ENCODE measurements at regions of chr20 and their contacts with region 1.

Region 1: GRCh38 chr20:48897246-48897994 is 24.1 kb upstream of the ARFGEF2 start:
- DNase-seq: peak in 1 of 2 donors; percentile 25
- H3K4me3 ChIP-seq: no peak overlapping the region
- H3K27ac ChIP-seq: no peak overlapping the region
- H3K4me1 ChIP-seq: peaks cover 0 to 6% (median 0%) of the 10 kb centered on the region in 4 donors
- H3K27me3 ChIP-seq: no peaks in the 10 kb centered on the region
- CTCF ChIP-seq: no peak

Region 2: GRCh38 chr20:48411141-48411618 is 486.2 kb before region 1 on chr20:
- intact Hi-C with region 1: no loop called
- DNase-seq: no peak
- H3K4me3 ChIP-seq: no peak overlapping the region
- H3K27ac ChIP-seq: no peak overlapping the region
- H3K4me1 ChIP-seq: no peaks in the 10 kb centered on the region
- H3K27me3 ChIP-seq: peaks cover 0 to 23% of the 10 kb centered on the region in 2 donors
- CTCF ChIP-seq: no peak

Region 3: GRCh38 chr20:48828022-48828743 is 69.2 kb before region 1 on chr20:
- intact Hi-C with region 1: loop called (anchors 10 kb)
- DNase-seq: peak; percentile 70 to 85
- H3K4me3 ChIP-seq: peak overlapping the region; percentile 67 to 85
- H3K27ac ChIP-seq: peak overlapping the region; percentile 57 to 71
- H3K4me1 ChIP-seq: peaks cover 0 to 60% (median 31%) of the 10 kb centered on the region in 4 donors
- H3K27me3 ChIP-seq: no peaks in the 10 kb centered on the region
- CTCF ChIP-seq: peak; percentile 18 to 61

Region 4: DNA sequence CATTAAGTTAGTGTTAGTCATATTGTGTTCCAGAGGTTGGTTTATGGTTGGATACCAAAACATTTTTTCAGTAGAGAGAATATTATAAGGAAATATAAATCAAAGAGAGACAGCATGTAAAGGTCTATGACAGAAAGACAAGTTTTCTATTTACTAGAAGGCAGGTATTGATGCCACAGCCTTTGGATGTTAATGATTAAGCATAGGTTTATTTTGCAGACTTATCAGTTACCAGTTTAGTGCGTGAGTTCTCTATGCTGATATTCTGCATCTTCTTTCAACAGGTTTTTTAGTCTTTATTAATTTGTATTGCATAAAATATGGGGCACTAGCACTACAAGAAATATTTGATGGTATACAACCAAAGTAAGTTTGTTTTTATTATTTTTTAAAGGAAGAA is 194.3 kb after region 1 on chr20:
- intact Hi-C with region 1: no loop called
- DNase-seq: no peak
- H3K4me3 ChIP-seq: no peak overlapping the region
- H3K27ac ChIP-seq: no peak overlapping the region
- H3K4me1 ChIP-seq: no peaks in the 10 kb centered on the region
- H3K27me3 ChIP-seq: no peaks in the 10 kb centered on the region
- CTCF ChIP-seq: no peak